Activated B cell treated with CpG ODN at 0.5 μM for 24 hours (primary cell): ENCODE measurements at regions of chr1 and their contacts with region 1.

Region 1: GRCh38 chr1:93814059-93814794 is 64.8 kb downstream of the DNTTIP2 start:
- DNase-seq: no peak
- ATAC-seq: peak; percentile 97
- H3K4me3 Mint-ChIP-seq: no peak overlapping the region
- H3K27ac Mint-ChIP-seq: no peak overlapping the region
- H3K4me1 Mint-ChIP-seq: peaks cover 16% of the 10 kb centered on the region
- H3K27me3 Mint-ChIP-seq: no peaks in the 10 kb centered on the region
- CTCF ChIP-seq: peak; percentile 55

Region 2: GRCh38 chr1:93437976-93438605 is 376.1 kb before region 1 on chr1:
- CTCF ChIA-PET with region 1: interaction called, 19 read pairs
- POLR2A ChIA-PET with region 1: no interaction called
- intact Hi-C with region 1: loop called (anchors 1 kb)
- DNase-seq: no peak
- ATAC-seq: peak; percentile 76
- H3K4me3 Mint-ChIP-seq: no peak overlapping the region
- H3K27ac Mint-ChIP-seq: no peak overlapping the region
- H3K4me1 Mint-ChIP-seq: peaks cover 3% of the 10 kb centered on the region
- H3K27me3 Mint-ChIP-seq: peaks cover 3% of the 10 kb centered on the region
- CTCF ChIP-seq: no peak

Region 3: DNA sequence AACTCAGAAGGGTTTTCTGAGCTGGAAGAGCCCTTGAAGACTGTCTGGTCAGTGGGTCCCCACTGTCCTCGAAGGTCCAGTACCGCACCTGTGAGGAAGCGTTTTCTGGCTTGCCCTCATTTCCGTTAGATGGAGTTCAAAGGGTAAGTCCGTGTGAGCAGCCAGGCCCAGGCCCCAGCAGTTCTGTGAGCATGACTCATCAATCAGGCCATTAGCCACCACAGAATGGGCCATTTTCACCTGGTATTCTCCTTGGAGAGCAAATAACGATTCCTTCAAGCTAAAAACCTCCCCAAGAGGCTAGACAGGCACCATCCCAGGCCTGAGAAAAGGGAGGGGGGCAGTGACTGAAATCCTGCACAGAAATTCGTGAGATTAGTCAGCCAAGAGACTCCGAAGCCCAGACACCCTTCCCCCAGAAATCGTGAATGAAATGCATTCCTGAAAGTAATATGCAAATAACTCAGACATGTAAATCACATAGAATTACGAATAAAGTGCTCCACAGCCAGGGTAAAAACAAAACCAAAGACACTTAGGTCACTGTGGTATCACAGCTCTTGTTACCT is 198.6 kb before region 1 on chr1:
- CTCF ChIA-PET with region 1: interaction called, 11 read pairs
- POLR2A ChIA-PET with region 1: no interaction called
- intact Hi-C with region 1: no loop called
- DNase-seq: no peak
- ATAC-seq: peak; percentile 65
- H3K4me3 Mint-ChIP-seq: peak overlapping the region; percentile 32
- H3K27ac Mint-ChIP-seq: peak overlapping the region; percentile 44
- H3K4me1 Mint-ChIP-seq: peaks cover 85% of the 10 kb centered on the region
- H3K27me3 Mint-ChIP-seq: no peaks in the 10 kb centered on the region
- CTCF ChIP-seq: no peak

Region 4: GRCh38 chr1:93686497-93687250 is 127.6 kb before region 1 on chr1:
- CTCF ChIA-PET with region 1: interaction called, 21 read pairs
- POLR2A ChIA-PET with region 1: interaction called, 5 read pairs
- intact Hi-C with region 1: no loop called
- DNase-seq: no peak
- ATAC-seq: no peak
- H3K4me3 Mint-ChIP-seq: peak overlapping the region; percentile 26
- H3K27ac Mint-ChIP-seq: peak overlapping the region; percentile 41
- H3K4me1 Mint-ChIP-seq: peaks cover 70% of the 10 kb centered on the region
- H3K27me3 Mint-ChIP-seq: no peaks in the 10 kb centered on the region
- CTCF ChIP-seq: no peak

Region 5: GRCh38 chr1:93749894-93750301 is 64.3 kb before region 1 on chr1:
- CTCF ChIA-PET with region 1: interaction called, 19 read pairs
- POLR2A ChIA-PET with region 1: interaction called, 4 read pairs
- intact Hi-C with region 1: loop called (anchors 1 kb)
- DNase-seq: no peak
- ATAC-seq: peak; percentile 62
- H3K4me3 Mint-ChIP-seq: peak overlapping the region; percentile 76
- H3K27ac Mint-ChIP-seq: peak overlapping the region; percentile 94
- H3K4me1 Mint-ChIP-seq: peaks cover 60% of the 10 kb centered on the region
- H3K27me3 Mint-ChIP-seq: no peaks in the 10 kb centered on the region
- CTCF ChIP-seq: no peak